ENCODE measurements at regions of chr6 and their contacts with region 1.

Region 1: GRCh38 chr6:136927292-136927691 is 5.2 kb downstream of the SLC35D3 start:
- DNase-seq: peak; percentile 59
- H3K4me3 ChIP-seq: no peak overlapping the region
- H3K27ac ChIP-seq: no peak overlapping the region
- H3K4me1 ChIP-seq: peaks cover 9% of the 10 kb centered on the region
- H3K27me3 ChIP-seq: peaks cover 33% of the 10 kb centered on the region
- CTCF ChIP-seq: peak; percentile 63

Region 2: DNA sequence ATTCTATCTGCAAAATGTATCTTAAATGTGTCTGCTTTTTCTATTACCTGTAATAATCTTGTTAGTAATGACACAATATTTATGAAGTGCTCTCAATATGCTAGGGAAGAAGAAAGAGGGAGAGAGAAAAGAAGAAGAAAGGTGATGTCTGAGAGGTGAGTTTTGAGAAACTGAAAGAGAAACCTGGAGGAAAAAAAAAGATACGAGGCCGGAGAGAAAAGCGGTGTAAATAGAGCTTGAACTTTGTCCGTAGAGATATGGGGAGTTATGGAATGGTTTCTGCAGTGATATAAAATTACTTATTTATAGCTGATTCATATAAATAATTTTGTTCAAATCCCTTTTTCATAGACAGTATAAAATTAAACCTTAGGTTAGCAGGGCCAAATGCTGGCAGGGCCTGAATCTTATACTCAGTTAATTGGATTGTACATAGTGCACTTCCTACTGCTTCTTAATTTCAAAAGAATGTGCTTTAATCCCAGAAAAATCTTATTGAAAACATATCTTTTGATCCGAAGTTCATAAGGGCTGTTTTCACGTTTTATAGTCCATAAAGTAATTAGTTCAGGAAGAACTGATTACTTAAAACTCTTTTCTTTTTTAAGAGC is 1703.2 kb before region 1 on chr6:
- CTCF ChIA-PET with region 1: no interaction called
- POLR2A ChIA-PET with region 1: no interaction called
- intact Hi-C with region 1: no loop called
- DNase-seq: peak; percentile 27
- H3K4me3 ChIP-seq: no peak overlapping the region
- H3K27ac ChIP-seq: no peak overlapping the region
- H3K4me1 ChIP-seq: peaks cover 15% of the 10 kb centered on the region
- H3K27me3 ChIP-seq: no peaks in the 10 kb centered on the region
- CTCF ChIP-seq: no peak

Region 3: GRCh38 chr6:136249336-136249735 is 678.0 kb before region 1 on chr6:
- CTCF ChIA-PET with region 1: no interaction called
- POLR2A ChIA-PET with region 1: no interaction called
- intact Hi-C with region 1: no loop called
- DNase-seq: no peak
- H3K4me3 ChIP-seq: peak overlapping the region; percentile 77
- H3K27ac ChIP-seq: no peak overlapping the region
- H3K4me1 ChIP-seq: peaks cover 7% of the 10 kb centered on the region
- H3K27me3 ChIP-seq: no peaks in the 10 kb centered on the region
- CTCF ChIP-seq: no peak

Region 4: DNA sequence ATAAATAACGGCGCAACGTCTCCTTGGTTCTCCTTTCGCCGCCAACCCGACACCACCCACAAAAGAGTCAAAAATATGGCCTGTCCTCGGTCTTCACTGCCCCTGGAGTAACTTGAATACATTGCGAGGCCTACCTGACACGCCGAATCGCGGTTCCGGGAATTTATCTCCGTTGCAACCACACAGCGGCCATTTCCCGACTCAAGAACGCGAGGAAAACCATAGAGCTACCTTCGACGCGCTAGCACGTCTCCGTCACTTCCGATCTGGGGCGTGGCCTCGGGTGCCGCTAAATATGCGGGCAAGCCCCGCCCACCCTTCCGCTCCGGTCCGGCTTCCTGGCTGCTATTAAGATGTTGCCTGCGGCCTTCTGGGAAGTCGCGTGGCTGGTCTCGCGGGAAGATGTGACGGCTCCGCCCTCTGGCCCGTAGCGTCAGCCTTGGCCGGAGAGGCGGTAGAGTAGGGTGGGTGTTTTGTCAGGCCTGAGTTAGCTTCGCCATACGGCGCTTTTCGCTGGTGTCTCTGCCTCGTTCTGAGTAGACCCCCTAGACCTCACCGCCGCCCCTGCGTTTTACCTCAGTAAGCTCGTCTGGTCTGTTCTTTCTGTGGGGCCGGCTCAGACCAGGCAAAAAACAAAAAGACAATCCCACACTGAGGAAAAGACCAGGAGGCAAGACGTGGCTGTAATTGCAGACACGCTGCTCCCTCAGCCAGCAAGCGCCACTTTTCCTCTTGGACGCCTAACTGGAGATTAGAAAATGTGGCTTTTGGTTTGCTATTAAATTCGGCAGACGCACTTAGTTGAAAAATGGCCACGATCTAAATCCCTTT is 637.5 kb before region 1 on chr6 and contains the start of gene BCLAF1:
- CTCF ChIA-PET with region 1: no interaction called
- POLR2A ChIA-PET with region 1: no interaction called
- intact Hi-C with region 1: loop called (anchors 10 kb)
- DNase-seq: peak; percentile 99
- H3K4me3 ChIP-seq: peak within 1 kb of the TSS; percentile 85
- H3K27ac ChIP-seq: peak within 1 kb of the TSS; percentile 100
- H3K4me1 ChIP-seq: peaks cover 17% of the 10 kb centered on the region
- H3K27me3 ChIP-seq: no peaks in the 10 kb centered on the region
- CTCF ChIP-seq: no peak
- total RNA-seq, gene BCLAF1: 272 and 284 TPM in 2 replicates

Region 5: DNA sequence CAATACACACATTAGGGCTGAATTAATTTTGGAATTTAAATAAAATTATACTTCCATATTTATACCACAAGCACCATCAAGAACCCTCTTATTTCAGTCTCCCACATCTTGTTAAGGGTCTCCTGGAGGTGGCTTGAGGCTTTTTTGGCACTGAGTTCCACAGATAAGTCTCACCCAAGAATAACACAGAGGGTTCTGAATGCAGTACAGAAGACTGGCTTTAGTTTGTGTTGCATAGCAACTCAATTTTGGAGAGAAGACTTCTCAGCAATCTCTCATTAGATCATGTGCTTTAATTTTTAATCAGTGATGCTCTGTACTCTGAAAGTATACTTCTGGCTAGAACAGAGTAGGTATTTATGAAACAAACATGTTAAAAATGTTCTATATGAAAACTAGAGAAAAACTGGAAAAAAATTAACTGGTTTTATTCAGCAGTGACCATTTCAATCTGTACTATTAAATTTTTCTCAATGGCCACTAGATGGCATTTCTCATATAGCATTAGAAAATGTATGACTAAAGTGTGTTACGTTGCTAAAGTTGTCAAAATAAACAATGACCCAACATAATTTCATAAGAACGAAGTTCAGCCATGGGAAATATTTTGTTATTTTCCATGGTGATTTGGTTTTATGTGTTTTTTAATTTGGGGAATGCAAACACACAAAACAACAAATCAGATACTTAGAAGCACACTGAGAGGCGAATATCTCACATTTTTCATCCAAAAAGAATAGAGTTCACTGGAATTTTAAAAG is 344.4 kb before region 1 on chr6:
- CTCF ChIA-PET with region 1: no interaction called
- POLR2A ChIA-PET with region 1: no interaction called
- intact Hi-C with region 1: loop called (anchors 10 kb)
- DNase-seq: peak; percentile 65
- H3K4me3 ChIP-seq: no peak overlapping the region
- H3K27ac ChIP-seq: no peak overlapping the region
- H3K4me1 ChIP-seq: no peaks in the 10 kb centered on the region
- H3K27me3 ChIP-seq: no peaks in the 10 kb centered on the region
- CTCF ChIP-seq: peak; percentile 70

Region 6: DNA sequence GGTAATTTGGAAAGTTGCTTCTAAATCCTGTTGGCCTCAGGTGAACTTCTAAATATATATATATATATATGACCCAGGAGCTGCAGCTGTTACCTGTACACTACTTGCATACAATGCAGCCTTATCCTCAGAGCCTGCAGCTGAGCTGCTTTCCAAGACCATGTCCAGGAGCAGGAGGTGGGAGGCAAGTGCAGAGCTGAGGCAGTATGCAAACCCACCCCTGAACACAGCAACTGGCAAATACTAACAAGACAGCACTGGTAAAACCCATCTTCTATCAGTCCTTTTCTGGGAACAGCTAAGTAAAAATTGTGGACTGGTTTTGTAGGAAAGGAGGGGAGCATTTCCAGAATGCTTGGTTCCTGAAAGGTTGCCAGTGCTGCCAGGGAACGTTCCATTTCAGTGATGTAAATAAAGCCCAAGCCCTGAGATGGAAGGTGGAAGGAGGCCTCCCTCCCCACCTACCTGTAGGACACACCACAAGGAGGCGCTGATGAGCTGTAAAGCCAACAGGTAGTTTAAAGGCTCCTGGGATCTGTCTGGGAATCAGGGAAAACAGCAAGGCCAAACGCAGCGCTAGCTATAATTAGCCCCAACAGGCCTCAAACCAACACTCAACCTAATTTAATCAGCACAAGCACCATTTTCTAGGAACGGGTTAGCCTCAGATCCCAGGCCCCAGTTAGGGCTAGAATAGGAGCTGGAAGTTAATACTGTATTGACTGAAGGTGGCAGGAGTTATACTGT is 283.3 kb before region 1 on chr6:
- CTCF ChIA-PET with region 1: no interaction called
- POLR2A ChIA-PET with region 1: no interaction called
- intact Hi-C with region 1: loop called (anchors 10 kb)
- DNase-seq: peak; percentile 82
- H3K4me3 ChIP-seq: no peak overlapping the region
- H3K27ac ChIP-seq: no peak overlapping the region
- H3K4me1 ChIP-seq: peaks cover 9% of the 10 kb centered on the region
- H3K27me3 ChIP-seq: no peaks in the 10 kb centered on the region
- CTCF ChIP-seq: peak; percentile 91

Region 7: GRCh38 chr6:136846046-136846445 is 81.2 kb before region 1 on chr6:
- CTCF ChIA-PET with region 1: no interaction called
- POLR2A ChIA-PET with region 1: no interaction called
- intact Hi-C with region 1: loop called (anchors 5 kb)
- DNase-seq: peak; percentile 56
- H3K4me3 ChIP-seq: no peak overlapping the region
- H3K27ac ChIP-seq: no peak overlapping the region
- H3K4me1 ChIP-seq: no peaks in the 10 kb centered on the region
- H3K27me3 ChIP-seq: no peaks in the 10 kb centered on the region
- CTCF ChIP-seq: peak; percentile 76